Sigmoid colon (tissue), 7 donors: ENCODE measurements at regions of chr9 and their contacts with region 1.

Region 1: GRCh38 chr9:71819115-71819739 is 50.9 kb upstream of the CEMIP2 start:
- DNase-seq: no peak
- H3K4me3 ChIP-seq: no peak overlapping the region
- H3K27ac ChIP-seq: no peak overlapping the region
- H3K4me1 ChIP-seq: no peaks in the 10 kb centered on the region
- H3K27me3 ChIP-seq: no peaks in the 10 kb centered on the region
- CTCF ChIP-seq: peak; percentile 12 to 69 (median 44)
- EP300 ChIP-seq: no peak
- POLR2A ChIP-seq: no peak

Region 2: DNA sequence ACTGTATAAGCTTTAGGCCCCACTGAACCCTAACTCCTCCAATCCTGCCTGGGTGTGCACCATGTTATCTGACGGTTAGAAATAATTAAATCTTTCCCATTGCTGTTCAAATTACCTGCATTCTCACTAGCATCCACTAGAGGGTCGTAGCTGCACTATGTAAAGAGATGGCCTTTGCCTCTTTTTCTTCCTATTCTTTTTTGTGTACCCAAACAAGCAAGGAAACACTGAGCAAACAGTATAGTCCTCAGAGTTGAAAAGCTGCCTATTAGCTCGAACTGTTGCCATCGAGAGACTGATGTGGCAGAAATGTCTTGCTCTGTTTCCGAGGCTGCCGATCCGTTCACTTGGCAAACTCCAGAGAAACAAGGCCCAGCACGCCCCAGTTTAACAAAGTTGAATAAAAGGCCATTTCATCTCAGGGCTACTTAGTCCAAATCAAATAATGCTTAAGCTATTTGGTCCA is 534.0 kb before region 1 on chr9:
- intact Hi-C with region 1: loop called (anchors 2 kb)
- DNase-seq: no peak
- H3K4me3 ChIP-seq: no peak overlapping the region
- H3K27ac ChIP-seq: no peak overlapping the region
- H3K4me1 ChIP-seq: no peaks in the 10 kb centered on the region
- H3K27me3 ChIP-seq: no peaks in the 10 kb centered on the region
- CTCF ChIP-seq: peak; percentile 51 to 83 (median 60)
- EP300 ChIP-seq: no peak
- POLR2A ChIP-seq: no peak

Region 3: GRCh38 chr9:71504636-71505035 is 314.6 kb before region 1 on chr9:
- intact Hi-C with region 1: no loop called
- DNase-seq: no peak
- H3K4me3 ChIP-seq: no peak overlapping the region
- H3K27ac ChIP-seq: no peak overlapping the region
- H3K4me1 ChIP-seq: peaks cover 0 to 6% (median 0%) of the 10 kb centered on the region in 4 donors
- H3K27me3 ChIP-seq: no peaks in the 10 kb centered on the region
- CTCF ChIP-seq: no peak
- EP300 ChIP-seq: no peak
- POLR2A ChIP-seq: no peak

Region 4: DNA sequence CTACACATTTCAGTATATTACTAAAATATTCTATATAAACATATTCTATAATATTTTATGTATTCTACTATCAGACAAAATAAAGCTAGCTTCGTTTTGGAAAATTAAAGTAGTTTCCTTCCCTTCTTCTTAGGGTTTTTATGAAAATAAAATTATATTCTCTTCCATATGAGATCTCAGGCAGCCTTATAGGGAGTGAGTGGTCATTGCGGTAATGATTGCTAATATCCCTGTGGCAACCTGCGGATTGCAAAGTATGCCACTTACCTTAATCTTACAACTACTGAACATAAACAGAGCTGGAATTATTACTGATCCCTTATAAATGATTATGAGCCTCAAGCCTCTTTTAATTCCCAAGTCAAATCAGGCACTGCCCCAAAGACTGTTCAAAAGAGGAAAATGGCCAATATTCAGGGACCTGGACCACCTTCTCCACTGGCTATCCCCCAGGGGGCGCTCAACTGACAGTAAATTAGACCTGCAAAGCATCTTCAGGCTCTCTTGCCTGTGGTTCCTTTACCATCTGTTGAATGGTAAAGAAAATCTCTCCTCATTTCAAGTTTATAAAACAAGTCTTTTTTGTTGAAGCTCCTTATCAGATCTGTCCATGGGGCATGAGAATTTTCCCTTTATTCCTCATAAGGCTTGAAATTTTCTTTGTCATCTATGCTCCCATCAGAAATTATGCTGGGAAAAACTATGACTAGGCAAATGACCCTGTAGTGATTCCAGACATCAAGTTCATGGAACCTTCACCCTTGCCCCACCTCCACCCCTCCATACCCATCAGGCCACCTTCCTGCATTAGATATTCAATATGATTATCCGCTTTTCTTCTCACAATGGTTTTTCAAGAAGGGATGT is 214.8 kb before region 1 on chr9:
- intact Hi-C with region 1: loop called (anchors 2 kb)
- DNase-seq: peak; percentile 83
- H3K4me3 ChIP-seq: no peak overlapping the region
- H3K27ac ChIP-seq: no peak overlapping the region
- H3K4me1 ChIP-seq: no peaks in the 10 kb centered on the region
- H3K27me3 ChIP-seq: no peaks in the 10 kb centered on the region
- CTCF ChIP-seq: peak; percentile 54 to 71 (median 61)
- EP300 ChIP-seq: no peak
- POLR2A ChIP-seq: no peak

Region 5: DNA sequence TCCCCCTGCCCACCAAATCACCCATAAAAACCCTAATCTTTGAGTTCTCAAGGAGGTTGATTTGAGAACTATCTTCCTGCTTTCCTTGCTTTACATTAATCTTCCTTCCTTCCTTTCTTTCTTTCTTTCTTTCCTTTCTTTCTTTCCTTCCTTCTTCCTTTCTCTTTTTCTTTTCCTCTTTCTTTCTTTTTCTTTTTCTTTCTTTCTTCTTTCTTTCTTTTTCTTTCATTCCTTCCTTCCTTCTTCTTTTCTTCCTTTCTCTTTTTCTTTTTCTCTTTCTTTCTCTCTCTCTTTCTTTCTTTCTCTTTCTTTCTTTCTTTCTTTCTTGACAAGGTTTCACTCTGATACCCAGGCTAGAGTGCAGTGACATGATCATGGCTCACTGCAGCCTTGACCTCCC is 16.4 kb after region 1 on chr9:
- intact Hi-C with region 1: no loop called
- DNase-seq: no peak
- H3K4me3 ChIP-seq: no peak overlapping the region
- H3K27ac ChIP-seq: no peak overlapping the region
- H3K4me1 ChIP-seq: no peaks in the 10 kb centered on the region
- H3K27me3 ChIP-seq: no peaks in the 10 kb centered on the region
- CTCF ChIP-seq: no peak
- EP300 ChIP-seq: no peak
- POLR2A ChIP-seq: no peak